Activated naive CD8-positive, alpha-beta T cell treated with anti-CD3 and anti-CD28 coated beads, Interleukin-2, amount 10 ng/mL, durations not matched to agents 7 days and 5 days (primary cell): ENCODE measurements at regions of chr16 and their contacts with region 1.

Region 1: DNA sequence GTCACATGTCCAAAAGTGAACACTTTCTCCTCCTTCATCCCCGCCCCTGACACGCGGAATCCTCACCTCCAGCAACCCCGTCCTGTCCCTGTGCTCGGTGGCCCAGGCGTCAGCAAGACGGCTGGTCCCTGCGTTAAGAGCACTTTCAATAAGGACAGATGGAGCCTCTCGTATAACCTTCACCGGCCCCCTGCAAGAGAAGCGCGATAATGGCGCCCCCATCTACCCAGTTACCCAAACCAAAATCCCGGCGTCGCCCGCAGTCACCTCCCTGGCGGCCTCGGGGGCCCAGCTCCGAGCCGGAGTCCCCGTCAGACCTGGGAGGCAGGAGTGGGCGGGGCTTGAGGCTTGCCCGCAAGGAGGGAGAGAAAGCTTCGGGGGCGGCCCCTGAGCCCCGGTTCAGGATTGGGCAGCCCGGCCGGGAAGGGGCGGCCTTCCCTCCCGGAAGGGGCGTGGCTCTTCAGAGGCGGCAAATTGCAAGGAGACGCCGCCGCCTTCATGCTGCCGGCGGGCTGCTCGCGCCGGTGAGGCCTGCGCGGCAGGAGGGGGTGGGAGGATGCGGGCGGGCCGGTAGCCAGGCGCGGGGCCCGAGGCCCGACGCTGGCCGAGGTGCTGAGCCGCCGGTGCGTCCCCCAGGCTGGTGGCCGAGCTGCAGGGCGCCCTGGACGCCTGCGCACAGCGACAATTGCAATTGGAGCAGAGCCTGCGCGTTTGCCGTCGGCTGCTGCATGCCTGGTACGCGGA is at the start of gene TEDC2:
- DNase-seq: peak; percentile 98
- ATAC-seq: peak; percentile 95
- H3K4me3 Mint-ChIP-seq: peak within 1 kb of the TSS; percentile 86
- H3K27ac Mint-ChIP-seq: peak within 1 kb of the TSS; percentile 91
- H3K4me1 Mint-ChIP-seq: peaks cover 13% of the 10 kb centered on the region
- H3K27me3 Mint-ChIP-seq: no peaks in the 10 kb centered on the region
- total RNA-seq, gene TEDC2: 16.0 to 17.8 TPM

Region 2: DNA sequence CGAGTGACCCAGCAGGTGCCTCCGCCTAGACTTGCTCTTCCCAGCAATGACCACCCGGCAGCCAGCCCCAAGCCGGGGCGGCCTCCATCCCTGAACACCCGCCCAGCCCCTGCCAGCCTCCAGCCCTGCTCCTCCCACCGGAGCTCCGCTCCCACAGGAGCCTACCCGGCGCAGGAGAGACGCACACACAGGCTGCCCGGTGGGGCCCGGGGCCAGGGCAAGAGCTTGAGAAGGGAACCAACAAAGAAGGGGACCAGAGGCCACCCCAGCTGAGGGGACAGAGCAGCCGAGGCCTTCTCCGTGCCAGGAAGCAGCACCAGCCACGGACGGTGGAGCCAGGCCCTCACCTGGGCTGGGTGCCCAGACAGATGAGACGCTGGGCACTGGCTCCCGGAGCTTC is 338.0 kb before region 1 on chr16:
- POLR2A ChIA-PET with region 1: no interaction called
- DNase-seq: no peak
- ATAC-seq: no peak
- H3K4me3 Mint-ChIP-seq: no peak overlapping the region
- H3K27ac Mint-ChIP-seq: no peak overlapping the region
- H3K4me1 Mint-ChIP-seq: no peaks in the 10 kb centered on the region
- H3K27me3 Mint-ChIP-seq: no peaks in the 10 kb centered on the region

Region 3: DNA sequence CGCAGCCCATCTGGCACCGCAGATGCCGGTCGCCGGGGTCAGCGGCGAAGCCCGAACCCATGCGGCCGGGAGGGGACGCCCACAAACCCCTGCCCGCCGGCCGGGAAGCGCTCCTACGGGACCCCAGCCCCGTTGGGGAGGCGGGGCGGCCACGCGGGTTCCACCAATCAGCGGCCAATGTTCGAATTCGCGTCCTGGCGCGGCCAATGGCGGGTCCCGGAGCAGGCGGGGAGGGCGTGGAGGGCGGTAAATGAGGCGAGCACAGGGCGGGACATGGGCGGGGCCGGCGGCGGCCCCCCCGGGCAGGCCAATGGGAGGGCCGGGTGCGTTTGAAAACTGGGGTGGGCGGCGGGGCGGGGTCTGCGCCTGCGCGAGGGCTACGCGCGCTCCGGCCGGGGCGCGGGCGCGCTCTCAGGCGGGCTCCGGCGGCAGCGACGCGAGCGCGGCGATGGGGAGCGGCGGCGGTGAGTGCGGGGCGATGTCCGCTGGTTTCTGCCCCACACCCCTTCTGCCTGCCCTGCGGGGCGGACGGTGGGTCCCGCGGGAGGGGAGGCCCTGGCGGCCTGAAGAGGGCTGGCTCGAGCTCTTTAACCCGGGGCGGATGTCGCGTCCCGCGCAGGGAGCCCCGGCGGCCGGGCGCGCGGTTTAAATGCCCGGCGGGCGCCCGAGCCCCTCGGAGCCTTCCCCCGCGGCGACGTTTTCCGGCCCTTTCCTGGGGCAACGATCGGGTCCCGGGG is 30.6 kb before region 1 on chr16 and contains the start of gene CCNF:
- POLR2A ChIA-PET with region 1: interaction called, 10 read pairs
- DNase-seq: peak; percentile 95
- ATAC-seq: peak; percentile 92
- H3K4me3 Mint-ChIP-seq: peak within 1 kb of the TSS; percentile 92
- H3K27ac Mint-ChIP-seq: peak within 1 kb of the TSS; percentile 92
- H3K4me1 Mint-ChIP-seq: peaks cover 29% of the 10 kb centered on the region
- H3K27me3 Mint-ChIP-seq: peaks cover 1% of the 10 kb centered on the region
- total RNA-seq, gene CCNF: 67.7 to 70.5 TPM

Region 4: GRCh38 chr16:2438121-2438520 is 21.7 kb before region 1 on chr16:
- POLR2A ChIA-PET with region 1: interaction called, 14 read pairs
- DNase-seq: no peak
- ATAC-seq: no peak
- H3K4me3 Mint-ChIP-seq: no peak overlapping the region
- H3K27ac Mint-ChIP-seq: no peak overlapping the region
- H3K4me1 Mint-ChIP-seq: peaks cover 19% of the 10 kb centered on the region
- H3K27me3 Mint-ChIP-seq: no peaks in the 10 kb centered on the region

Region 5: GRCh38 chr16:2474877-2475412 is 15.1 kb after region 1 on chr16 and contains the start of gene TBC1D24:
- POLR2A ChIA-PET with region 1: interaction called, 14 read pairs
- DNase-seq: peak; percentile 93
- ATAC-seq: peak; percentile 72
- H3K4me3 Mint-ChIP-seq: peak within 1 kb of the TSS; percentile 71
- H3K27ac Mint-ChIP-seq: peak within 1 kb of the TSS; percentile 45
- H3K4me1 Mint-ChIP-seq: peaks cover 9% of the 10 kb centered on the region
- H3K27me3 Mint-ChIP-seq: peaks cover 18% of the 10 kb centered on the region
- total RNA-seq, gene TBC1D24: 16.5 to 17.9 TPM

Region 6: DNA sequence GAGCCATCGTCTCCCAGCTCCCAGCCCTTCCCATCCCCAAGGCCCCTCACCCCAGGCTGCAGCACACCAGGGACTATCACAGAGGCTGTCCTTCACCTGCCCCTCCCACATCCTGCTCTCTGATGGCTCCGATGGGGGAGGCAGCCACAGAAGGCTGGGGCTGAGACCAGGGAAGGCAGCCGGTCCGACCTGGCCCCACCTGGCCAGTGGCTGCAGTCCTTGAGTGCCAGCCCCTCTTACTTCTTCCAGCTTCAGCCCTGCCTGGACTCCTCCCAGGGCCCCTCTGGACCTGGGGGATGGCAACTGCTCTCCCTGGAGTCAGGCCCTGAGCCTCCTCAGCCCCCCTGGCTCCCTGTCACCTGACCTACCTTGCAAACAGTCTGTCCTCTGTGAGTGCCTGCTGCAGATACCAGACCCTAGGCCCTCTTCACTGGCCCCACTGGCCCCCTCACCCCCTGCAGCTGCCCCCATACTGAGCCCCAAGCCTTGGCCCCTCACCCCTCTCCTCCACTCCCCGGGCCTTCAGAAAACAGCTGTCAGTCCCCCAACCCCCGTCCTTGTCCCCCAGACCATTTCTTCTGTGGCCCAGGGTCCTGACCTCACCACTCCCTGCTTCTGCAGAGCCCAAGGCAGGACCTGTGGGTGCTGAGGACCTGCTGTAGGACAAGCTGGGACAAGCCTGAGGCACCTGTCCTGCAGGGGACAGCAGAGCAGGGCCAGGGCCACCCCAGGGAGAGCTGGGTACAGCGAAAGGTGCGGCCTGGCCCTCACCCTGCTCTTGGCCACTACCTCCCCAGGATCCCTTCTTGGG is 280.0 kb after region 1 on chr16:
- POLR2A ChIA-PET with region 1: no interaction called
- DNase-seq: peak; percentile 63
- ATAC-seq: peak; percentile 97
- H3K4me3 Mint-ChIP-seq: peak overlapping the region; percentile 35
- H3K27ac Mint-ChIP-seq: peak overlapping the region; percentile 88
- H3K4me1 Mint-ChIP-seq: peaks cover 10% of the 10 kb centered on the region
- H3K27me3 Mint-ChIP-seq: peaks cover 3% of the 10 kb centered on the region